ENCODE measurements at regions of chr12 and their contacts with region 1.

Region 1: GRCh38 chr12:106247674-106248311 is at the start of gene CKAP4:
- DNase-seq: peak; percentile 30
- ATAC-seq: peak; percentile 71
- H3K4me3 ChIP-seq: peak within 1 kb of the TSS; percentile 80 to 90 (median 83)
- H3K27ac ChIP-seq: peak within 1 kb of the TSS; percentile 68
- H3K4me1 ChIP-seq: peaks cover 49% of the 10 kb centered on the region
- H3K27me3 ChIP-seq: peaks cover 0 to 4% of the 10 kb centered on the region in 2 experiments; a peak in 1 of 5 replicates
- CTCF ChIP-seq: no peak
- EP300 ChIP-seq: no peak
- POLR2A ChIP-seq: peak in 1 of 2 experiments; percentile 45; a peak in 1 of 4 replicates
- RAD21 ChIP-seq: peak; percentile 35; the same call in 1 of the 2 replicates
- total RNA-seq, gene CKAP4: 37.3 and 70.2 TPM in 2 replicates

Region 2: DNA sequence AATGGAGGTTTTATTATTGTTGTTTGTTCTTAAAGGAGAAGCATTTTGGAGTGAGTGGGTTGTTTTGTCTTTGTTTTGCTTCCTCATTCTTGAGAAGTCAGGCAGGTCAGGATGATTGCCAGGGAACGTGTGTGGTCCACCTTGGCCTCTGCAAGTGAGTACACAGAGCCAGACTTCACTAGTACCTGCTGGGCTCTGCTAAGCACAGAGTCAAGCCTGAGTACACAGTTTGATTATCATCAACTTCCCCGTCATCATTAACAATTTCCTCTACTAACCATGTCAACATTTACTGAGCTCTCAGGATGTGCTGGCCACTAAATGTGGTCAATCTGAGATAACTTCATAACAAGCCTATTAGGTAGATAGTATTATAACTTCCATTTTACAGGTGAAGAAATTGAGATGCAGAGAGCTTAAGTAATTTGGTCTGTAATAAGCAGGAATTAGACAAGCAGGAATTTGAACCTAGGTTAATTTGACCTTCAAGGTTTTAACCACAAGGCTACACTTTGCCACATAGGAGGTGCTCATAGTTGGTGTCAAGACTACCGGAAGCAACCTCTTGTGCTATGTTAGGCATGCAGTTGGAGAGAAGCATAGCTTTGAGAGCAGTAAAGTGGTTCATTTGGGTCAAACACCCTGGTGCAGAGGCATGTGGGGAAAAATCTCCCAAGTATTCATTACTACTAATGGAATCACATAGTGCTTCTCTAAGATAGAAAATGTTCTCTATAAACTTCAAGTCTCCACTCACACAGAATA is 287.3 kb before region 1 on chr12:
- CTCF ChIA-PET with region 1: no interaction called
- POLR2A ChIA-PET with region 1: no interaction called
- in situ Hi-C with region 1: no loop called
- intact Hi-C with region 1: no loop called
- DNase-seq: no peak
- ATAC-seq: no peak
- H3K4me3 ChIP-seq: no peak overlapping the region
- H3K27ac ChIP-seq: no peak overlapping the region
- H3K4me1 ChIP-seq: no peaks in the 10 kb centered on the region
- H3K27me3 ChIP-seq: no peaks in the 10 kb centered on the region; a peak in 1 of 5 replicates
- CTCF ChIP-seq: no peak
- EP300 ChIP-seq: no peak
- POLR2A ChIP-seq: no peak
- RAD21 ChIP-seq: no peak

Region 3: DNA sequence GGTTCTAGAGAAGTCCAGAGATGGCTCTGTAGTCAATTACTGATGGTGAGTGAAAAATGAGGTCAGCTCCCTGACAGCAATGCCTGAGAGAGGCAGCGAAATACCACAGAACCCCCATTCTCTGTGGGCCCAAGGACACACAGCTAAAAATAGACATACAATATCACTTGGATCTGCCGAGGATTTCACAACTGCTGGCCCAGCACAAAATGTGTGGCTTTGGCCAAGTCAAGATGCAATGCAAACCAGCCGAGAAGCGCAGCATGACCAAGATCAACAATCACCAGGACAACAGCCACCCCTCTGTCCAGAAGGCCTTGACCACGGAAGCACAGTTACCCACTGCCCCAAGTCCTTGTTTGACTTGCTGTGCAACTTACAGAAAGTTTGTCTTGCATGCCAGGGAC is 52.2 kb before region 1 on chr12:
- CTCF ChIA-PET with region 1: no interaction called
- POLR2A ChIA-PET with region 1: no interaction called
- in situ Hi-C with region 1: no loop called
- intact Hi-C with region 1: no loop called
- DNase-seq: peak; percentile 72
- ATAC-seq: peak; percentile 91
- H3K4me3 ChIP-seq: no peak overlapping the region
- H3K27ac ChIP-seq: peak overlapping the region; percentile 37
- H3K4me1 ChIP-seq: peaks cover 27% of the 10 kb centered on the region
- H3K27me3 ChIP-seq: peaks cover 0 to 2% of the 10 kb centered on the region in 2 experiments; a peak in 2 of 5 replicates
- CTCF ChIP-seq: peak; percentile 9; the same call in 1 of the 2 replicates
- EP300 ChIP-seq: peak in 1 of 2 experiments; percentile 66; a peak in 2 of 4 replicates
- POLR2A ChIP-seq: no peak
- RAD21 ChIP-seq: no peak

Region 4: GRCh38 chr12:106223485-106224354 is 24.1 kb before region 1 on chr12:
- CTCF ChIA-PET with region 1: no interaction called
- POLR2A ChIA-PET with region 1: no interaction called
- in situ Hi-C with region 1: no loop called
- intact Hi-C with region 1: loop called (anchors 2 kb)
- DNase-seq: peak; percentile 45
- ATAC-seq: peak; percentile 90
- H3K4me3 ChIP-seq: no peak overlapping the region
- H3K27ac ChIP-seq: no peak overlapping the region
- H3K4me1 ChIP-seq: peaks cover 11% of the 10 kb centered on the region
- H3K27me3 ChIP-seq: peaks cover 0 to 4% of the 10 kb centered on the region in 2 experiments; a peak in 1 of 5 replicates
- CTCF ChIP-seq: peak; percentile 93
- EP300 ChIP-seq: no peak
- POLR2A ChIP-seq: no peak
- RAD21 ChIP-seq: peak; percentile 84

Region 5: DNA sequence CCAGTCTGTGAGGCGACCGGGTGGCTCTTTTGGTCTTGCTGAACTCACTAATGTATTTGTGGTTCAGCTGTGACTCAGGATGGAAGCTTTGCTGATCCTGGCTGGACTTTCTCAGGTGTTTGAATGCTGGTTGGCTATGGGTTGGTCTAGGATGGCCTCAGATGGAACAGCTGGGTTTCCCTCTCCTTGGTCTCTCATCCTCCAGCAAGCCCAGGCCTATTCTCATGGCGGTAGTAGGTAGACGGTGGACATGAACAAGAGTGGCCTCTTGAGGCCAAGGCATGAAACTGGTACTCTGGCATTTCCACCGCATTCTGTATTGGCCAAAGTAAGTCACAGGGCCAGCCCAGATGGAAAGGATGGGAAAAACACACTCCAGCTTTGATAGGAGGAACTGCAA is 97.9 kb after region 1 on chr12:
- CTCF ChIA-PET with region 1: no interaction called
- POLR2A ChIA-PET with region 1: no interaction called
- in situ Hi-C with region 1: no loop called
- intact Hi-C with region 1: loop called (anchors 5 kb)
- DNase-seq: peak; percentile 77
- ATAC-seq: peak; percentile 93
- H3K4me3 ChIP-seq: no peak overlapping the region
- H3K27ac ChIP-seq: no peak overlapping the region
- H3K4me1 ChIP-seq: peaks cover 20% of the 10 kb centered on the region
- H3K27me3 ChIP-seq: peaks cover 0 to 4% of the 10 kb centered on the region in 2 experiments; a peak in 1 of 5 replicates
- CTCF ChIP-seq: peak; percentile 86
- EP300 ChIP-seq: no peak
- POLR2A ChIP-seq: no peak
- RAD21 ChIP-seq: peak; percentile 86

Region 6: DNA sequence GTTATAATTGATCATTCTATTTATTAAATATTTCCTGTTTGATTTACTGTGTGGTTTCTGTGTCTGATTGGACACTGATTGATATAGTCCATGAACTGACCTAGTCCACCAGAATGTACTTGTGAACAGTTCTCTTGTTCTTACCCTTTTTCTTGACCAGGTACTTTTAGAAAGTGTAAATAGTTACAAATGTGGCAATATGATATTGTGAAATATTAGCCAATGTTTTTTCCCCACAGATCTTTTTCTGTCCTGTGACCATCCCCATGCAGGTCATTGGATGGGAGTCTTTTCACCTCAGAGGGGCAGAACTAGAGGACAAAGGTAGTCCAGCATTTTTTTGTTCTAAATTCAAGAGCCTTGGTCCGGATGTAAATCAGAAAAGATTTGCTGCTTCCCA is 853.9 kb after region 1 on chr12:
- CTCF ChIA-PET with region 1: no interaction called
- POLR2A ChIA-PET with region 1: no interaction called
- in situ Hi-C with region 1: no loop called
- intact Hi-C with region 1: no loop called
- DNase-seq: peak; percentile 28
- ATAC-seq: peak; percentile 44; the same call in 1 of the 3 replicates
- H3K4me3 ChIP-seq: no peak overlapping the region
- H3K27ac ChIP-seq: no peak overlapping the region
- H3K4me1 ChIP-seq: peaks cover 32% of the 10 kb centered on the region
- H3K27me3 ChIP-seq: 0 out of 5 replicates have a peak, but pooled peaks cover 0 to 9% of the 10 kb centered on the region in 2 experiments
- CTCF ChIP-seq: no peak
- EP300 ChIP-seq: no peak
- POLR2A ChIP-seq: no peak
- RAD21 ChIP-seq: no peak

Measured in HepG2 (cell line).